ENCODE measurements at regions of chr18 and their contacts with region 1.

Region 1: GRCh38 chr18:62982600-62983251 is 267.4 kb downstream of the PHLPP1 start:
- DNase-seq: peak; percentile 82
- CTCF ChIP-seq: peak; percentile 74

Region 2: GRCh38 chr18:62425465-62426195 is 557.1 kb before region 1 on chr18:
- in situ Hi-C with region 1: loop called (anchors 25 kb)
- DNase-seq: peak; percentile 45
- CTCF ChIP-seq: peak; percentile 64

Region 3: DNA sequence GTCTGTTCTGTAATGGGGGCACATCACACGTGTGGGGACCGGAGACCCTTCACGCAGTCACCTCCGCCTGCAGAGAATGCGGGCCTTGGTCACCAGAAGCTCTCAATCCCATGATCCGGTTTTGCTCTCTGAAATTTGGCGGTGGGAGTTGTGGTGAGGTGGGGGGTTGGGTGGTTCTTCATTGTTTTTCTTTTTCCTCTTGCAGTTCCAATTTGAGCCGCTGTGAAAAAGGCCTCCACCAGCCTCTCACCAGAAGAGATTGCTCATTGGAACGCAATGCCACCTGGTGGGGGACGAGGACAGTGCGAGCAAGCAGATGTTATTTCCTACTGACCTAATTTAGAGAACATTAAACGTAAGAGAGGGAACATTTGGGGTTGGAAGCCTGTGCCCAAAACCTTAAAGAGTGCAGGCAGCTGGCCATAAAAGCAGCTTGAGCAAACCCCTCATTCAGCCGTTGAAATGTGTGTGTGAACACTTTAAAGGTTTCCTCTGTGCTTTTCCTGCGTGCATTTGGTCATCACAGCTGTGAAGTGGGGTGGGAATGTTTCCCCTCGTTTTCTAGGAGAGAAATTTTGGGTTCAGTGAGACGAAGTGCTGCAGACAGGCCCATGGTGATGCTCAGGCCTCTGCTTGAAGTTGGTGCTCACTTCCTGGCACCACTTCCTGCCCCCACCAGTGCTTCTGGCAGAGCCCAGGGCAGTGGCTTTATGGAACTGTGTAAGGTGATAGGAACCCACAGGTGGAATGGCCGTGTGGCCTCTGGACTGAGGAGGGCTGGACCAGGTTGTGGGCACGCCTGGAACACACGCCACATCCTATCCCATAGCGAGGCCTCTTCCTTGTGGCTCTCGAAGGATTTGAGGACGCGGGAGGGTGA is 398.2 kb before region 1 on chr18:
- in situ Hi-C with region 1: loop called (anchors 25 kb)
- DNase-seq: peak; percentile 88
- CTCF ChIP-seq: peak; percentile 95

Region 4: DNA sequence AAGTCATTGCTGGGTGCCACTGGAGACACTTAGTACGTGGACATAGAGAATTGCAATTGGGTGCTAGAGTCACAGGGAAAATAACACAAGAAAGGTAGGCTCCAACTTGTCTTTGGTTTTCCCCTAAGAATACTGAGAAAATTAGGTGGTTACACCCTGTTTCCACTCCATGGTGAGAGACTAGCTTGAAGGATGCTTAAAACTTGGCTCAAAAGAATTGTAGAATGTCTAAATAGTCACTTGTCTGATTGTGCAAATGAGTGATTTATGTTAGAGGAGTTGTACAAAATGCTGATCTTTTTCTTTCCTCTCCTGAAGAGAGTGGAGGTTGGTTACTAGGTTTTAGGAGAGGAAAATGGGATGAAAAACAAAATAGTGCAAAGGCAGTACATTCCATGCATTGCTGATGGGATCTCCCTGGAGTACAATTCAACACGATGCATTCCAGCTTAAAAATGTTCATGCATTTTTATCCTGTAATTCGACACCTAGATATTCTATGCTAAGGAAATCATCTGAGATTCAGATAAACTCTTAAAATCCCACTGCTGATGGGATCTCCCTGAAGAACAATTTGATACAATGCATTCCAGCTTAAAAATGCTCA is 557.3 kb after region 1 on chr18:
- in situ Hi-C with region 1: no loop called
- DNase-seq: no peak
- CTCF ChIP-seq: no peak

Region 5: DNA sequence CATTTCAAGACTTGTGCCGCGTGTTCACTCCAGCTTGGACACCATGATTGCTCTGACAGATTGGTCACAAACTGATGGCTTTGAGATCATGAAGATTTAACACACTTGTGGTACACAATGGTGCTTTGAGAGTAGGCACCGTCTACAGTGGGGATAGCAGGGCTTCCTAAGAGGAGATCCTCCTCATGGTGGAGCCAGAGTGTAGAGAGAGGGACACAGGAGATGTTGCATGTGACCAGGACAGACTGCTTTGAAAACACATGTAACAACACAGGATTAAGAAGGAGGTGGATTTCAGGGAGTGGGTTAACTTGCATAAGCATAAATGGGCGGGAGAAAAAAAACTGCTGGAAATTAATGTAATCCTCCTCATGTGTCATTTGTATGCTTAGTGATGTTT is 1261.8 kb after region 1 on chr18:
- in situ Hi-C with region 1: no loop called
- DNase-seq: no peak
- CTCF ChIP-seq: no peak

Measured in GM13976 (cell line).